Psoas muscle (tissue), 8 donors: ENCODE measurements at regions of chr17 and their contacts with region 1.

Region 1: DNA sequence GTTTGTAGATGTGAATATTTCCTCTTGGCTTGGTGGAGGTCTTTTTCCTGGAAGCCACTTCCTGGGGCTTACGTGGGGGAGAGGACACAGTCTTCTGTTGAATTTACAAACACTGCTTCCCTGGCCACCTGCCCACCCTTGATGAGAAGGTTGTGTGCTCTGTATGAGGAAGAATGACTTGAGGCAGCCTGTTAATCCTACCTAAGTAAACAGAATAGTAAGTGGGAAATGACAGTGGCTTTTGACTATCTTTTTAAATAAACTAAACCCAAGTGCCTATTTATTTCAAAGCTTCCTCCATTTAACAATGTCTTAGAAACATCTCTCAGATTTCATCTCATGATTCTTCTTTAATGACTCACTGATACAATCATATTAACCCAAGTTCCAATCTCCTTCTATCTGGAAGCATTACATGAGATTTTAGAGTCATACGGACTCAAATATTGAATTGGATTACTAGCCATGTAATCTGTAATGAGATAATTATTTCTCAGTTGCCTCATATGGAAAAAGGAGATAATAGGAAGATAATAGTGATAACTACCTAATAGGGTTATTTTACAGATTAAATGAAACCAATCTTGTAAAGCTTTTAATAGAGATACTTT is 96.6 kb upstream of the SMIM36 start:
- DNase-seq: peak in 1 of 2 donors; percentile 31
- ATAC-seq: peak in 1 of 4 donors; percentile 43
- H3K4me3 ChIP-seq: no peak overlapping the region
- H3K27ac ChIP-seq: no peak overlapping the region
- H3K4me1 ChIP-seq: peaks cover 5% of the 10 kb centered on the region
- H3K27me3 ChIP-seq: no peaks in the 10 kb centered on the region
- CTCF ChIP-seq: no peak

Region 2: GRCh38 chr17:55314784-55315491 is 292.9 kb before region 1 on chr17:
- intact Hi-C with region 1: loop called in 1 of 2 experiments (anchors 5 kb)
- DNase-seq: no peak
- ATAC-seq: no peak
- H3K4me3 ChIP-seq: no peak overlapping the region
- H3K27ac ChIP-seq: no peak overlapping the region
- H3K4me1 ChIP-seq: no peaks in the 10 kb centered on the region
- H3K27me3 ChIP-seq: no peaks in the 10 kb centered on the region
- CTCF ChIP-seq: no peak

Region 3: GRCh38 chr17:55437159-55437605 is 170.7 kb before region 1 on chr17:
- intact Hi-C with region 1: no loop called
- DNase-seq: no peak
- ATAC-seq: no peak
- H3K4me3 ChIP-seq: no peak overlapping the region
- H3K27ac ChIP-seq: no peak overlapping the region
- H3K4me1 ChIP-seq: no peaks in the 10 kb centered on the region
- H3K27me3 ChIP-seq: no peaks in the 10 kb centered on the region
- CTCF ChIP-seq: no peak

Region 4: DNA sequence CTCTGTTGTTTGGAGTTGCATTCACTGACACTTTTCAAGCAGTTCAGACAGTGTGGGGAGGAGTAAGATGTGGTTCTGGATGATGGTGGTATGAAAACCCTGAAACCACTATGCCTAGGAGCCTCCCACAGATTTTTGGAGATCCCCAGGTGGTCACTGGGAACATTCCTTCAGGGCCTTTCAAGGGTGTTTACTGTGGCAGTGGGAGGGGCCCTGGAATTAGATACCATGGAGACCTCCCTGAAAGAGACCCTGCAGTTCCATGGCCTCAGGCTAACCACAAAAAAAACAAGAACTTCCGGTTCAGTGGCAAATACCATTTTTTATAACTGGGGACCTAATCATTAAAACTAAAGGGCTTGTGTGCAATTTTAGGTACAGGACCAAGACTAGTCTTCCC is 34.9 kb after region 1 on chr17:
- intact Hi-C with region 1: no loop called
- DNase-seq: no peak
- ATAC-seq: no peak
- H3K4me3 ChIP-seq: no peak overlapping the region
- H3K27ac ChIP-seq: no peak overlapping the region
- H3K4me1 ChIP-seq: peaks cover 7% of the 10 kb centered on the region
- H3K27me3 ChIP-seq: peaks cover 0 to under 1% (median 0%) of the 10 kb centered on the region in 3 donors
- CTCF ChIP-seq: no peak

Region 5: GRCh38 chr17:55673743-55674506 is 66.1 kb after region 1 on chr17:
- intact Hi-C with region 1: loop called in 1 of 2 experiments (anchors 5 kb)
- DNase-seq: no peak
- ATAC-seq: peak in 1 of 4 donors; percentile 32
- H3K4me3 ChIP-seq: no peak overlapping the region
- H3K27ac ChIP-seq: no peak overlapping the region
- H3K4me1 ChIP-seq: no peaks in the 10 kb centered on the region
- H3K27me3 ChIP-seq: no peaks in the 10 kb centered on the region
- CTCF ChIP-seq: no peak